Lower leg skin (tissue), 4 donors: ENCODE measurements at regions of chr12 and their contacts with region 1.

Region 1: GRCh38 chr12:100234598-100235304 is 32.1 kb downstream of the DEPDC4 start:
- DNase-seq: no peak
- H3K4me3 ChIP-seq: no peak overlapping the region
- CTCF ChIP-seq: no peak
- POLR2A ChIP-seq: no peak

Region 2: GRCh38 chr12:100720016-100720654 is 485.4 kb after region 1 on chr12:
- intact Hi-C with region 1: loop called (anchors 10 kb)
- DNase-seq: no peak
- H3K4me3 ChIP-seq: no peak overlapping the region
- CTCF ChIP-seq: no peak
- POLR2A ChIP-seq: no peak